PC-3 (cell line): ENCODE measurements at regions of chr14 and their contacts with region 1.

Region 1: GRCh38 chr14:60670989-60671388 is 21.7 kb upstream of the SIX1 start:
- DNase-seq: no peak
- ATAC-seq: no peak
- H3K4me3 ChIP-seq: no peak overlapping the region
- H3K27ac ChIP-seq: no peak overlapping the region
- H3K4me1 ChIP-seq: no peaks in the 10 kb centered on the region
- H3K27me3 ChIP-seq: no peaks in the 10 kb centered on the region
- CTCF ChIP-seq: no peak

Region 2: DNA sequence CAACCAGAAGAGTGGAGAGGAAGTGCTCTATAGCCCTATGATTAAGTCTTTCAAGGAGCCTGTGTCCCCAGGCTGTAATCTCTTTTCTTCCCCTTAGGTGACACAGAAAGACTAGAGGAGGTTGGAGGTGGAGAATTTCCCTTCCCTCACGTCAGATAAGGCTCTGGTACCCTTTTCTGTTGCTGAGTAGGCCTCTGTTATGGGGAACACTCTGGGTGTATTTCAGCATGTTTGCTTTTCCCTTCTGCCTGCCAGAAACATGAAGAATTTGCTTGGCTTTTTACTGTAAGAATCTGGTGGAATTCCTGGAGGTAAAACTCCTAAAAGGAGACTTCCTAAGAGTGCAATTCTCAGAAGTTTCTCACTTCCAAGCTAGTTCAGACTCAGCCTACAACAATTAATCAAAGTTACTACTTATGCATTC is 80.0 kb before region 1 on chr14:
- CTCF ChIA-PET with region 1: no interaction called
- POLR2A ChIA-PET with region 1: no interaction called
- intact Hi-C with region 1: no loop called
- DNase-seq: no peak
- ATAC-seq: peak; percentile 49
- H3K4me3 ChIP-seq: no peak overlapping the region
- H3K27ac ChIP-seq: no peak overlapping the region
- H3K4me1 ChIP-seq: no peaks in the 10 kb centered on the region
- H3K27me3 ChIP-seq: no peaks in the 10 kb centered on the region
- CTCF ChIP-seq: no peak

Region 3: DNA sequence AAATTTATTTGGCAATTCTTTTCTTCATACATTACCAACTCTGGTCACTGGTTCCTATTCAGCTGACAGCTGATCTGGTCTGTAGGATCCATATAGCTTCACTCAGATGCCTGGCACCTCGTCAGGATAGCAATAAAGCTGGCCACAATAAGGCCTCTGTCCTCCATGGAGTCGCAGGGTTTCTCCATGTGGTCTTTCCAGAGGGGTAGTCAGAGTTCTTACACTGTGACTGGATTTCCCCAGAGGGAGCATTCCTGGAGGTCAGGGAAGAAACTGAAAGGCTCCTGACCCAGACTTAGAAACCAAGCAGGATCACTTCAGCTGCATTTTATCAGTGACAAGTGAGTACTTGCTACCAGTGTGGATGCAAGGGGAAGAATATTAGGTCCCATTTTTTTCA is 13.2 kb after region 1 on chr14:
- CTCF ChIA-PET with region 1: no interaction called
- POLR2A ChIA-PET with region 1: interaction called, 17 read pairs
- intact Hi-C with region 1: no loop called
- DNase-seq: no peak
- ATAC-seq: no peak
- H3K4me3 ChIP-seq: no peak overlapping the region
- H3K27ac ChIP-seq: no peak overlapping the region
- H3K4me1 ChIP-seq: no peaks in the 10 kb centered on the region
- H3K27me3 ChIP-seq: no peaks in the 10 kb centered on the region
- CTCF ChIP-seq: no peak